Ovary (tissue), 10 donors: ENCODE measurements at regions of chr10 and their contacts with region 1.

Region 1: DNA sequence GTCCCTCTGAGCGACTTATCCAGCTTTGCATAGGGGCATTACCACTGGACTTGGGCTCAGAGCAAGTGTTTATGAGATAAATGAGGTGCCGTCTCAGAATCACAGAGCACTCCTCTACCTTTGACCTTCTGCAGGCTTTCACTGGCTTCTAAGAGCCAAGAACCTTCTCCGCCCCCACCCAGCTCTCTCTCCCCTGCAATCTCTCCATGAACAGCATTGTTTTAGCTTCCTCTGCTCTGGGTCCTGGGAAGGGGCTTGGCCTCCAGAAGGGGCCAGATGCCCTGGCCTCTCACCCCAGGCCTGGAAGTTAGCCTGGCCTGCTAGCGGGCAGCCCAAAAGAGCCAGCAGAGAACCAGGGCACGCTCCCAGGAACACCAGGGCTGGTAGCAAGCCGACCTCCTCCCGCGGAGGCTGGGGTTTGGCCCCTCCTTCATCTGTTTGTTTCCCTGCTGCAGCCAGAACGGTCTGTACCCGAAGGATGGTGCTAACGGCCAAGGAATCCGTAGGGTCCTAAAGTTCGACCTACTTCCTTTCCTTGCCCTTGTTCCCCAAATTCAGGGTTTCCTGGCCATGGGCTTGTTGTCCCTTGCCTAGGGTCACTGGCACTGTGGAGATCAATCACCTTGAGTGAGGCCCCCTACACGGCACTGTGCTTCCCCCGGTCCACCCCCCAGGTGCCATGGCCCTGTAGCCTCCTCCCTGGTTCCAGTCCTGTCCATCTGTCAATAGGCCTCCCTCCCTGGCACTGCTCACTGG is 18.7 kb upstream of the DDIT4 start:
- DNase-seq: peak; percentile 90 to 97 (median 94)
- H3K4me3 ChIP-seq: no peak overlapping the region
- H3K27ac ChIP-seq: peak overlapping the region; percentile 82 to 95
- H3K4me1 ChIP-seq: peaks cover 38% of the 10 kb centered on the region
- H3K27me3 ChIP-seq: no peaks in the 10 kb centered on the region
- CTCF ChIP-seq: no peak
- EP300 ChIP-seq: peak; percentile 84
- POLR2A ChIP-seq: peak; percentile 42

Region 2: DNA sequence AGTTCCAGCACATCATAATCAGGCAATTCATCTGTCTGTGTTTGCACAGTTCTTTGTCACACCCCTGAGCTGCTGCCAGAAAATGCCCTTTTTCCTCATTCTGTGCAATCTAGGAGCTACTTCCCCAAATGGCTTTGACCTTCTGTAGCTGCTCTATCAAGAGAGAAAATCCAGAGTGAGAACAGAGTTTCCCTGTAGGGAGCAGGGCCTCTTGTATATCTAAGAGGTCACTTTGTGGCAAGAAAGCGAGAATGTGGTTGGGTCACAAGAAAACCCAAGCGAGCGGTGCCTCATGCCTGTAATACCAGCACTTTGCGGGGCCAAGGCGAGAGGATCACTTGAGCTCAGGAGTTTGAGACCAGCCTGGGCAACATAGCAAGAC is 911.6 kb before region 1 on chr10:
- intact Hi-C with region 1: no loop called
- DNase-seq: no peak
- H3K4me3 ChIP-seq: no peak overlapping the region
- H3K27ac ChIP-seq: no peak overlapping the region
- H3K4me1 ChIP-seq: no peaks in the 10 kb centered on the region
- H3K27me3 ChIP-seq: no peaks in the 10 kb centered on the region
- CTCF ChIP-seq: no peak
- EP300 ChIP-seq: no peak
- POLR2A ChIP-seq: no peak

Region 3: DNA sequence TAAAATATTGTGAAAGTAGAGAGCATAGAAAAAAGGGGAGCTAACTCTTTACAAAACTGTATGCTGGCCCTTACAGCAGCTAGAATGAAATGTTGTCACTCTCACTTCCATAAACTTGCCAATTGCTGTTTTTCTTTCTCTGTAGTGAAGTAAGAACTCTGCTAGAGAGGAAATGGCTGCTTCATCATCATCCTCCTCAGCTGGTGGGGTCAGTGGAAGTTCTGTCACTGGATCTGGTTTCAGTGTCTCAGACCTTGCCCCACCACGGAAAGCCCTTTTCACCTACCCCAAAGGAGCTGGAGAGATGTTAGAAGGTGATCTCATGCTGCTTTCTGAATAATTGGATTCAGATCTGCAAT is 31.3 kb before region 1 on chr10:
- intact Hi-C with region 1: loop called in 1 of 4 experiments (anchors 5 kb)
- DNase-seq: peak in 2 of 5 donors; percentile 8 to 28
- H3K4me3 ChIP-seq: no peak overlapping the region
- H3K27ac ChIP-seq: peak overlapping the region; percentile 54 to 77
- H3K4me1 ChIP-seq: peaks cover 10% of the 10 kb centered on the region
- H3K27me3 ChIP-seq: no peaks in the 10 kb centered on the region
- CTCF ChIP-seq: no peak
- EP300 ChIP-seq: no peak
- POLR2A ChIP-seq: no peak

Region 4: GRCh38 chr10:72309290-72310240 is 54.6 kb after region 1 on chr10:
- intact Hi-C with region 1: loop called in 1 of 4 experiments (anchors 2 kb)
- DNase-seq: peak in 3 of 5 donors; percentile 63 to 73 (median 63)
- H3K4me3 ChIP-seq: no peak overlapping the region
- H3K27ac ChIP-seq: peak overlapping the region; percentile 77 to 81
- H3K4me1 ChIP-seq: peaks cover 27% of the 10 kb centered on the region
- H3K27me3 ChIP-seq: no peaks in the 10 kb centered on the region
- CTCF ChIP-seq: no peak
- EP300 ChIP-seq: no peak
- POLR2A ChIP-seq: no peak